ENCODE measurements at regions of chr9 and their contacts with region 1.

Region 1: DNA sequence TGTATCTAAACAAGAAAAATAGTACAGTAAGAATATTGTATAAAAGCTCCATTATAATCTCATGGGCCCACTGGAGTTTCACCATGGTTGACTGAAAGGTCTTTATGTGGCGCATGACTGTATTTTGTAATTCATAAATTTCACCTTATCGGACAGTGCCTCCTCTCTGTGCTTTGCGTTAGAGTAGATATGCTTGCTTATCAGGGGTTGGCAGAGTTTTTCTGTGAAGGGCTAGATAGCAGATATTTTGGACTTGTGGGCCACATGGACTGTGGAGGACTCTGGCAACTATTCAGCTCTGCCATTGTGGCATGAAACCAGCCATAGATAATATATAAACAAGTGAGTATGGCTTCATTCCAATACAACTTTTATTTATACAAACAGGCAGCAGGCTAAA is 23.2 kb downstream of the GAPVD1 start:
- DNase-seq: no peak
- H3K4me3 ChIP-seq: no peak overlapping the region
- H3K27ac ChIP-seq: no peak overlapping the region
- H3K4me1 ChIP-seq: peaks cover 19% of the 10 kb centered on the region
- H3K27me3 ChIP-seq: no peaks in the 10 kb centered on the region
- CTCF ChIP-seq: no peak
- POLR2A ChIP-seq: no peak

Region 2: GRCh38 chr9:125119643-125120286 is 165.1 kb before region 1 on chr9:
- intact Hi-C with region 1: no loop called
- DNase-seq: no peak
- H3K4me3 ChIP-seq: no peak overlapping the region
- H3K27ac ChIP-seq: no peak overlapping the region
- H3K4me1 ChIP-seq: peaks cover 5% of the 10 kb centered on the region
- H3K27me3 ChIP-seq: no peaks in the 10 kb centered on the region
- CTCF ChIP-seq: no peak
- POLR2A ChIP-seq: no peak

Region 3: DNA sequence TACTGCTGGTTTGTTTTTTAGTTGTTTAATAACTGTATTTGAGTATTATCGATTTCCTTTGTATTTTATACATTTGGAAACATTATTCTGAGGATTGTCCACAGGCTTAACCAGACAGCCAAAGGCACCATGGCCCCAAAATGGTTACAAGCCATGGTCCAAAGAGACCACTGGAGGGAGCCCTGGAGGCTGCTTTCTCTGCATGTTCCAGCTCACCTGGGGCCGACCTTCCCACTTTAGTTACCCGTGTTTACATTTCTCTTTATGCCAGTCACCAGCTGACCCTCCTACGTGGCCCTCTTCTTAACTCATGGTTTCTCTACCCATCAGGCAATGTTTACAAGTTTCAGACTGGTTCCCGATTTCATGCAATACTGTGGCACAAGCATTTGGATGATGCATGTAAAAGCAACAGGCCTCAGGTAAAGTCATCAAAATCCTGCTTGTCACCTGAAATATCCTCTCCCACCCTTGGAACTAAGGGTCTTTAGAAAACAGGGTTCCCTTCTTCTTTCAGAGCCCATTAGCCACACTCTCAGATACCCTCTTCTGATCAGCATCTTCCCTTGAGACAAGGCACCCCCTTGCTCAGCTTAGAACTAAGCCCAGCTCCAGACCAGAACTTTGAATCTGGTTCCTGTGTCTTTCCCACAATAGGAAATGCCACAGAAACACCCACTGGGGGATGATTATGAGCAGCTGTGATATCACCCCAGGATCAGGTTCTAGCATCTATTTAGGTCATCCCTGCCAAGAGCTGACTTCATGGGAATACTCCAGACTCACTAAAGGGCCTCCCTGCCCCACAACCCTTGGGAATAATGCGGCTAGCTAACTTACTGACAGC is 1929.8 kb after region 1 on chr9:
- intact Hi-C with region 1: loop called (anchors 5 kb)
- DNase-seq: no peak
- H3K4me3 ChIP-seq: no peak overlapping the region
- H3K27ac ChIP-seq: no peak overlapping the region
- H3K4me1 ChIP-seq: peaks cover 13% of the 10 kb centered on the region
- H3K27me3 ChIP-seq: no peaks in the 10 kb centered on the region
- CTCF ChIP-seq: peak in 2 of 3 experiments; percentile 23 to 55
- POLR2A ChIP-seq: no peak

Measured in vagina (tissue), 2 donors.